ENCODE measurements at regions of chr12 and their contacts with region 1.

Region 1: GRCh38 chr12:56224102-56224701 is at the start of gene NABP2:
- DNase-seq: peak; percentile 98
- H3K4me3 Mint-ChIP-seq: peak within 1 kb of the TSS; percentile 82
- H3K27ac Mint-ChIP-seq: peak within 1 kb of the TSS; percentile 88
- H3K4me1 Mint-ChIP-seq: peaks cover 24% of the 10 kb centered on the region
- H3K27me3 Mint-ChIP-seq: no peaks in the 10 kb centered on the region
- CTCF ChIP-seq: peak; percentile 78
- total RNA-seq, gene NABP2: 53.3 and 56.2 TPM in 2 replicates

Region 2: GRCh38 chr12:55973598-55974307 is 250.4 kb before region 1 on chr12 and contains the start of gene RAB5B:
- CTCF ChIA-PET with region 1: no interaction called
- POLR2A ChIA-PET with region 1: interaction called, 10 read pairs
- intact Hi-C with region 1: no loop called
- DNase-seq: peak; percentile 100
- H3K4me3 Mint-ChIP-seq: no peak within 1 kb of the TSS
- H3K27ac Mint-ChIP-seq: no peak within 1 kb of the TSS
- H3K4me1 Mint-ChIP-seq: peaks cover 25% of the 10 kb centered on the region
- H3K27me3 Mint-ChIP-seq: no peaks in the 10 kb centered on the region
- CTCF ChIP-seq: no peak
- total RNA-seq, gene RAB5B: 67.4 and 96.1 TPM in 2 replicates

Region 3: GRCh38 chr12:56007564-56008559 is 216.3 kb before region 1 on chr12:
- CTCF ChIA-PET with region 1: no interaction called
- POLR2A ChIA-PET with region 1: no interaction called
- intact Hi-C with region 1: no loop called
- DNase-seq: peak; percentile 43
- H3K4me3 Mint-ChIP-seq: peak overlapping the region; percentile 69
- H3K27ac Mint-ChIP-seq: peak overlapping the region; percentile 60
- H3K4me1 Mint-ChIP-seq: no peaks in the 10 kb centered on the region
- H3K27me3 Mint-ChIP-seq: no peaks in the 10 kb centered on the region
- CTCF ChIP-seq: no peak

Region 4: GRCh38 chr12:56127888-56128669 is 96.1 kb before region 1 on chr12 and contains the start of gene ESYT1:
- CTCF ChIA-PET with region 1: interaction called, 6 read pairs
- POLR2A ChIA-PET with region 1: interaction called, 30 read pairs
- intact Hi-C with region 1: loop called (anchors 1 kb)
- DNase-seq: peak; percentile 100
- H3K4me3 Mint-ChIP-seq: peak within 1 kb of the TSS; percentile 84
- H3K27ac Mint-ChIP-seq: peak within 1 kb of the TSS; percentile 84
- H3K4me1 Mint-ChIP-seq: peaks cover 26% of the 10 kb centered on the region
- H3K27me3 Mint-ChIP-seq: no peaks in the 10 kb centered on the region
- CTCF ChIP-seq: no peak
- total RNA-seq, gene ESYT1: 111 and 123 TPM in 2 replicates

Region 5: DNA sequence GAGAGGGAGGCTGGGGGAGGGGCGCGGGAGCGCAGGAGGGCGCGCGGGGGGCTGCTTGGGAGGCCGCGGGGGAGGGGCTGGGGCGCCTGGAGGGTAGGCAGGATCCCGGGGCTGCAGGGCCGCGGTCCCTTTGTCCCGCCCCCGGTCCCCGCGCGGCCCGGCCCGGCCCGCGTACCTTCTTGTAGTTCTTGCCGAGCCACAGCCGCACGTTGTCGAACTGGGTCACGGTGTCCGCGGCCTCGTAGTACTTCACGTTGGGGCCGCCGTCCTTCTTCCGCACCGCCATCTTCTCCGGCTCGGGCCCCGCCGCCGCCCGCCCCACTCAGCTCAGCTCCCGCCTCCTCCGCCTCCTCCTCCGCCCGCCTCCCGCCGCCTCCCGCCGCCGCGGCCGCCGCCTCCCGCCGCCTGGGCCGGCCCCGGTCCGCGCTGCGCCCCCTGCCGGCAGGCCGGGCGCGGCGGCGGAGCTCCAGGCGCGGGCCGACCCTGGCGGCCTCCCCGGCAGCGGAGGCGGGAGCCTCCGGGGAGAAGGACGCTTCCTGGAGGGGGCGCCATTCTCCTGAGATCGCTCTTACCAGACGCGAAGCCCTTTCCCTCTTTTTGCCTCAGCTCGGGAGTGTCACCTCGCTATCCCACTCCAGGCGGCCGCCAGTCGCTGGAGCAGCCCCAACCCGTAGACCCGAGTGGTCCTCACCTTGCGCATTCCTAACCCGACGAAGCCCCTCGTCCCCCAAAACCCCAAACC is 34.9 kb before region 1 on chr12 and contains the start of gene SMARCC2:
- CTCF ChIA-PET with region 1: interaction called, 20 read pairs
- POLR2A ChIA-PET with region 1: interaction called, 108 read pairs
- intact Hi-C with region 1: loop called (anchors 1 kb)
- DNase-seq: peak; percentile 87
- H3K4me3 Mint-ChIP-seq: peak within 1 kb of the TSS; percentile 85
- H3K27ac Mint-ChIP-seq: peak within 1 kb of the TSS; percentile 93
- H3K4me1 Mint-ChIP-seq: peaks cover 38% of the 10 kb centered on the region
- H3K27me3 Mint-ChIP-seq: no peaks in the 10 kb centered on the region
- CTCF ChIP-seq: peak; percentile 75
- total RNA-seq, gene SMARCC2: 52.1 and 57.0 TPM in 2 replicates

Region 6: GRCh38 chr12:56258057-56258819 is 34.0 kb after region 1 on chr12 and contains the start of gene ANKRD52:
- CTCF ChIA-PET with region 1: interaction called, 24 read pairs
- POLR2A ChIA-PET with region 1: interaction called, 28 read pairs
- intact Hi-C with region 1: no loop called
- DNase-seq: peak; percentile 70
- H3K4me3 Mint-ChIP-seq: peak within 1 kb of the TSS; percentile 84
- H3K27ac Mint-ChIP-seq: peak within 1 kb of the TSS; percentile 71
- H3K4me1 Mint-ChIP-seq: peaks cover 29% of the 10 kb centered on the region
- H3K27me3 Mint-ChIP-seq: no peaks in the 10 kb centered on the region
- CTCF ChIP-seq: peak; percentile 59
- total RNA-seq, gene ANKRD52: 46.3 and 73.8 TPM in 2 replicates

Region 7: DNA sequence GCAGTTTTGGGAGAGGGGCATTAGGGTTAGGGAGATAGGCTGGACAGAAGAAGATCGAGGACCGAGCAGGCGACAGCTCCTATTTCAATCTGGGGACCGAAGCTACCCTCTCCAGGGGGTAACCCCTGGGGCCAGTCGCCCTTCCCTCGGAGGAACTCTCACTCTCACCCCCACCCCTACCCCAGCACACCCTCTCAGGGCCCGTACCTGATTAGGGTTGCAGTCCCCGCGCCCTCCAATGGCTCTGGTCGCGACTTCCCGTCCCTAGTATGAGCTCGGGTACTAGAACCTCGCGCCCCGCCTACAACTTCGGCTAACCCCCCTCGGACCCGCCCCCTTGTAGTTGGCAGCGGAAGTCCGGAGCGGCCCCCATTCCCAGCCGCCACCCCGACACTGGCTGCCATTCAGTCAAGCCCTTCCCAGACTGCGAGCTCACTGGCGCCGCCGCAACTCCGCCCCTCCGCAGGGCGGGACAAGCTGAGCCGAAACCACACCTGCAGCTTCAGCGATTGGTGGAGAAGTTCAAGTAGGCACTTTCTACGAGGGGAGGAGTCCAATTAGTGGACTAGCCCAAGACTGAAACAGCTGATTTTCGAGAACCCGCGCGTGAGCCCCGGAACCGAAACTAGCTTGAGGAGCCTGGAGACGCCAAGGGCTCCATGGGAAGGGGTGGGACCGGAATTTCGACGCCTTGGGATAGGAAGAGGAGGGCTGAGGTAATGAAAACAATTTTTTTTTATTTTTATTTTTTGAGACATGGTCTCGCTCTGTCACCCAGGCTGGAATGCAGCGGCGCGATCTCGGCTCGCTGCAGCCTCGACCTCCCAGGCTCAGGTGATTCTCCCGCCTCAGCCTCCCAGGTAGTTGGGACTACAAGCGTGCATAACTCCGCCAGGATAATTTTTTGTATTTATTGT is 135.9 kb after region 1 on chr12 and contains the start of gene STAT2:
- CTCF ChIA-PET with region 1: no interaction called
- POLR2A ChIA-PET with region 1: interaction called, 27 read pairs
- intact Hi-C with region 1: no loop called
- DNase-seq: peak; percentile 100
- H3K4me3 Mint-ChIP-seq: peak within 1 kb of the TSS; percentile 94
- H3K27ac Mint-ChIP-seq: peak within 1 kb of the TSS; percentile 97
- H3K4me1 Mint-ChIP-seq: peaks cover 8% of the 10 kb centered on the region
- H3K27me3 Mint-ChIP-seq: no peaks in the 10 kb centered on the region
- CTCF ChIP-seq: no peak
- total RNA-seq, gene STAT2: 61.2 and 101 TPM in 2 replicates

Region 8: GRCh38 chr12:56413392-56413791 is 189.2 kb after region 1 on chr12:
- CTCF ChIA-PET with region 1: no interaction called
- POLR2A ChIA-PET with region 1: no interaction called
- intact Hi-C with region 1: no loop called
- DNase-seq: no peak
- H3K4me3 Mint-ChIP-seq: no peak overlapping the region
- H3K27ac Mint-ChIP-seq: no peak overlapping the region
- H3K4me1 Mint-ChIP-seq: no peaks in the 10 kb centered on the region
- H3K27me3 Mint-ChIP-seq: no peaks in the 10 kb centered on the region
- CTCF ChIP-seq: no peak